Activated CD8-positive, alpha-beta T cell treated with anti-CD3 and anti-CD28 coated beads for 36 hours (primary cell): ENCODE measurements at regions of chr14 and their contacts with region 1.

Region 1: GRCh38 chr14:92717571-92718042 is 30.8 kb downstream of the LGMN start:
- DNase-seq: peak; percentile 43
- ATAC-seq: peak; percentile 44
- H3K4me3 Mint-ChIP-seq: no peak overlapping the region
- H3K27ac Mint-ChIP-seq: no peak overlapping the region
- H3K4me1 Mint-ChIP-seq: no peaks in the 10 kb centered on the region
- H3K27me3 Mint-ChIP-seq: no peaks in the 10 kb centered on the region
- CTCF ChIP-seq: no peak

Region 2: GRCh38 chr14:92686900-92687444 is 30.6 kb before region 1 on chr14:
- CTCF ChIA-PET with region 1: interaction called, 11 read pairs
- POLR2A ChIA-PET with region 1: no interaction called
- intact Hi-C with region 1: no loop called
- DNase-seq: peak; percentile 67
- ATAC-seq: peak; percentile 81
- H3K4me3 Mint-ChIP-seq: no peak overlapping the region
- H3K27ac Mint-ChIP-seq: peak overlapping the region; percentile 25
- H3K4me1 Mint-ChIP-seq: no peaks in the 10 kb centered on the region
- H3K27me3 Mint-ChIP-seq: no peaks in the 10 kb centered on the region
- CTCF ChIP-seq: peak; percentile 99